HCT116 (cell line): ENCODE measurements at regions of chr3 and their contacts with region 1.

Region 1: DNA sequence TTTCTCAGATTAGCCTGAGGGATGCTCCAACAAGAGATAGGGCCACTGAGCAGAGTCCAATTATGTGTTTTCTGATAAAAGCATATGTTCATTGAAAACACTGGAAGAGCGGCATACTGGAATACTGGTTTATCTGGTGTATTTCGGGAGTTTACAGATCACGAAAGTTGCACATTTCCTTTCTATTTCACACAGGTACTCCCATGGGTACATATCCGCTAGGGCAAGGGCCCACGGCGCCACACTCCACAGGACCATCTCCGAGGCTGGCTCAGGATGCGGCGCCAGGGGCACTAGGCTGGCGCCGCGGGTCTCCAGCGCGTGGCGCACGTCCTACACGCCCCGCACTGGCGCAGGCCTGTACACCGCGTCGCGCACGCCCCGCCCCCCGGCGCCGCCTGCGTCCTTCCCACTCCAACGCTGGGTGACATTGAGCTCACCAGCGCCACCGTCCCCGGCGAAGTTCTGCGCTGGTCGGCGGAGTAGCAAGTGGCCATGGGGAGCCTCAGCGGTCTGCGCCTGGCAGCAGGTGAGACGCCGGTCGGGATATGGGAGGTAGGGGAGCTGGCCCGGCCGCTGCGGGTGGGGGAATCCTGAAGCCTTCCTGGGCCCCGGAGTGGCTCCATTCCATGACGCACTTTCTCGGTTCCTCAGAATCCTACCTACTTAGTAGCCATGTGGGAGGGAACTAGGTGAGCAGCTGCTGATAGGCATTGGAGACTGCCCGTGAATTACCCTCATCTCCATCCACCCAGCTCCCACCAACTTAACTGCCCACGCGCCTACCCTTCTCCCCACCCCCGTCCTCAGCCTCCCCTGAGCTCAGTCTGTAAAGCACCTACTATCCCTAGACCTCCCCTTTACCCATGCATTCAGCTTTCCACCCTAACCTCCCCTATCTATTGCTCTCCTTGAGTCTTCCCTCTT is at the start of gene FAM162A:
- DNase-seq: peak; percentile 88
- ATAC-seq: peak; percentile 95
- H3K4me3 ChIP-seq: peak within 1 kb of the TSS; percentile 72 to 78
- H3K27ac ChIP-seq: peak within 1 kb of the TSS; percentile 67
- H3K4me1 ChIP-seq: peaks cover 2 to 14% of the 10 kb centered on the region in 2 experiments; a peak in 3 of 4 replicates
- H3K27me3 ChIP-seq: no peaks in the 10 kb centered on the region
- CTCF ChIP-seq: peak; percentile 52 to 69 (median 58)
- POLR2A ChIP-seq: peak; percentile 82
- RAD21 ChIP-seq: peak; percentile 42
- total RNA-seq, gene FAM162A: 74.1 TPM

Region 2: GRCh38 chr3:122305818-122306621 is 78.0 kb before region 1 on chr3:
- CTCF ChIA-PET with region 1: interaction called, 10 read pairs
- POLR2A ChIA-PET with region 1: no interaction called
- RAD21 ChIA-PET with region 1: no interaction called
- intact Hi-C with region 1: no loop called
- DNase-seq: peak; percentile 23
- ATAC-seq: peak; percentile 93
- H3K4me3 ChIP-seq: no peak overlapping the region
- H3K27ac ChIP-seq: no peak overlapping the region
- H3K4me1 ChIP-seq: 0 out of 4 replicates have a peak, but pooled peaks cover 0 to 3% of the 10 kb centered on the region in 2 experiments
- H3K27me3 ChIP-seq: no peaks in the 10 kb centered on the region
- CTCF ChIP-seq: peak; percentile 40 to 54 (median 49); a peak in 5 of 6 replicates
- POLR2A ChIP-seq: no peak
- RAD21 ChIP-seq: peak; percentile 63

Region 3: GRCh38 chr3:122415720-122416654 is 32.0 kb after region 1 on chr3 and contains the start of gene WDR5B:
- CTCF ChIA-PET with region 1: interaction called, 8 read pairs
- POLR2A ChIA-PET with region 1: interaction called, 12 read pairs
- RAD21 ChIA-PET with region 1: no interaction called
- intact Hi-C with region 1: no loop called
- DNase-seq: peak; percentile 94
- ATAC-seq: peak; percentile 92
- H3K4me3 ChIP-seq: peak within 1 kb of the TSS; percentile 82 to 84
- H3K27ac ChIP-seq: peak within 1 kb of the TSS; percentile 74
- H3K4me1 ChIP-seq: peaks cover 6 to 15% of the 10 kb centered on the region in 2 experiments; a peak in 3 of 4 replicates
- H3K27me3 ChIP-seq: no peaks in the 10 kb centered on the region
- CTCF ChIP-seq: peak in 2 of 3 experiments; percentile 11 to 17; a peak in 1 of 6 replicates
- POLR2A ChIP-seq: peak; percentile 97
- RAD21 ChIP-seq: no peak
- total RNA-seq, gene WDR5B: 3.4 TPM